K562 (cell line): ENCODE measurements at regions of chr12 and their contacts with region 1.

Region 1: DNA sequence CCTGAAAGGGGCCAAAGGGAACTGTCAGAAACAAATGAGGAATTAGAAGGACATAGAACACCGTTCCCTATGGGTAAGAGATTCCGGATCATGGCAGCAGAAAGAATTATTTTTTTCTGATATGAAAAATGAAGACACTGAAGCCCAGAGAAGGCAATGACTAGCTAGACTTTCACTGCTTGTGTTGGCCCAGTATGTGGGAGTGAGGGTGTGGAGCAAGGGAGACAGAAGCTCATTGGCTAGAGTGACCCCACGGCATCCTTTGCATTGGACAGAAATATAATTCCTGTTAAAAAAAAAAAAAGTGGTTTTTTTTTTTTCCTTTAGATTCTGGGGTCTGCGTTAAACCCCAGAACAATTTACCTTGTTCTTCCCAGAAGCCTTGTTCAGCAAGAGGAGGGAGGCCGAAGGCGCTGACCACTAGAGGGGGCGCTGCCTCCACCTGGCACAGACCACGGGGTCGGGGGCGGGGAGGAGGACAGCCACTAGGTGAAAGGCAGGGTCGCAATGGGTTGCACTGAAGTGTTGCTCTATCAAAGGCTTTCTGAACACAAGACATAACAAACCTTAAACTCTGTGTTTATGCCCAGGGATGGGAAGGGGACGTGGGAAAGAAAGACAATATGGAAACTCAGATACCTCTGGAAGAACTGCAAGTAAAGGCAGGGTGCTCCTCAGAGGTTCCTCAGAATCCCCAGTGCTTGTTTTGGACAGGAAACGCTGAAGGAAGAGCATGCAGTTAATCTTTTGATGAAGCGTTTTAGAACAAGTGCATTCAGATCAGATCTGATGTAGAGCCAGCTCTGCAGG is 156.8 kb downstream of the KCNA5 start:
- DNase-seq: peak; percentile 61 to 74 (median 69)
- ATAC-seq: peak; percentile 90
- H3K4me3 ChIP-seq: no peak overlapping the region
- H3K27ac ChIP-seq: no peak overlapping the region
- H3K4me1 ChIP-seq: no peaks in the 10 kb centered on the region
- H3K27me3 ChIP-seq: no peaks in the 10 kb centered on the region
- CTCF ChIP-seq: peak; percentile 71 to 83 (median 74)
- EP300 ChIP-seq: no peak
- POLR2A ChIP-seq: no peak
- RAD21 ChIP-seq: peak; percentile 68 to 80

Region 2: DNA sequence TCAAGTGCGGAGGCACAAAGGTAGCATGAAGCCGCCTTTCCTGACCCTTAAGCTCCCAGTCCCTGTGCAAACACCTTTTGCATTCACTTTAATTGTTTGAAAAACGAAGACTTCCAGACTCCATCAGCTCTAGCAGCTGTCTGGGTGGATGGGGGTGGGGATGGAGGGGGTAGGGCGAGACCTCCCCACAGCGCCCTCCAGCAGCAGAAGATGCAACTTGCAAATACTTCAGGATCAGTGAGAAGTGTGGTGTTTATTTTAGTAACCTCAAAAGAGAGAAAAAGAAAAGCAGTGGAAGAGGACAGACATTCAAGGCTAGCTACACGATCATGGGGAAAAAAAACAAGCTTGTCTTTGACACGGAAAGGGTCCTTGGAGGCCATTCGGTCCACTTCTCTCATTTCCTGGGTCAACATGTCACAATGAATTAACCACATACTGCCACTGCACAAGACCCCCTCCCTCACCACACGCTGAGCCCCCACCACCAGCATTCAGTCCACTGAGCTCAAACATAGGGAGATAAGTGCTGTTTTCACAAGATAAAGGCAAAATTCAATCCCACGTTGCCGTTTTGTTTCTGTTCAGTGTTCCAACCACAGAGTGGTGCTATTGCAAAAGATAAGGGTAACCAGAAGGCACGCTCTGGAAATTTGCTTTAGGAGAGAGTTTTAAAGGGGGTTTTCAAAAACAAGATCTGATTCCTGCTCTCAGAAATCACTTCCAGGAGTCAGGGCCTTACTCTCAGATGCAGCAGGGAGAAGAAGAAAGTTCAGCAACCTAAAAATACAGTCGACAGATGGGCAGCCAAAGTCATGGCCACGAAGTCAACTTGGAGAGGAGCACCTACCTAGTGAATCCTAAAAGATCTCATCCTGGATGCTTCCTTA is 228.1 kb after region 1 on chr12:
- CTCF ChIA-PET with region 1: no interaction called
- POLR2A ChIA-PET with region 1: no interaction called
- in situ Hi-C with region 1: loop called (anchors 10 kb)
- intact Hi-C with region 1: loop called (anchors 5 kb)
- DNase-seq: peak; percentile 9 to 19 (median 17)
- ATAC-seq: peak; percentile 40; the same call in 1 of the 3 replicates
- H3K4me3 ChIP-seq: no peak overlapping the region
- H3K27ac ChIP-seq: no peak overlapping the region
- H3K4me1 ChIP-seq: no peaks in the 10 kb centered on the region
- H3K27me3 ChIP-seq: peaks cover 2 to 11% of the 10 kb centered on the region in 2 experiments; a peak in 3 of 5 replicates
- CTCF ChIP-seq: peak; percentile 31 to 54 (median 44)
- EP300 ChIP-seq: no peak
- POLR2A ChIP-seq: no peak
- RAD21 ChIP-seq: peak in 1 of 2 experiments; percentile 59; a peak in 3 of 4 replicates

Region 3: GRCh38 chr12:5442251-5443006 is 241.9 kb after region 1 on chr12:
- CTCF ChIA-PET with region 1: interaction called, 21 read pairs
- POLR2A ChIA-PET with region 1: no interaction called
- in situ Hi-C with region 1: loop called (anchors 10 kb)
- intact Hi-C with region 1: loop called (anchors 5 kb)
- DNase-seq: peak; percentile 18 to 44 (median 21)
- ATAC-seq: peak; percentile 72
- H3K4me3 ChIP-seq: no peak overlapping the region
- H3K27ac ChIP-seq: no peak overlapping the region
- H3K4me1 ChIP-seq: no peaks in the 10 kb centered on the region
- H3K27me3 ChIP-seq: peaks cover 0 to 9% of the 10 kb centered on the region in 2 experiments; a peak in 2 of 5 replicates
- CTCF ChIP-seq: peak; percentile 34 to 74 (median 52); a peak in 5 of 6 replicates
- EP300 ChIP-seq: no peak
- POLR2A ChIP-seq: no peak
- RAD21 ChIP-seq: peak; percentile 49 to 74

Region 4: DNA sequence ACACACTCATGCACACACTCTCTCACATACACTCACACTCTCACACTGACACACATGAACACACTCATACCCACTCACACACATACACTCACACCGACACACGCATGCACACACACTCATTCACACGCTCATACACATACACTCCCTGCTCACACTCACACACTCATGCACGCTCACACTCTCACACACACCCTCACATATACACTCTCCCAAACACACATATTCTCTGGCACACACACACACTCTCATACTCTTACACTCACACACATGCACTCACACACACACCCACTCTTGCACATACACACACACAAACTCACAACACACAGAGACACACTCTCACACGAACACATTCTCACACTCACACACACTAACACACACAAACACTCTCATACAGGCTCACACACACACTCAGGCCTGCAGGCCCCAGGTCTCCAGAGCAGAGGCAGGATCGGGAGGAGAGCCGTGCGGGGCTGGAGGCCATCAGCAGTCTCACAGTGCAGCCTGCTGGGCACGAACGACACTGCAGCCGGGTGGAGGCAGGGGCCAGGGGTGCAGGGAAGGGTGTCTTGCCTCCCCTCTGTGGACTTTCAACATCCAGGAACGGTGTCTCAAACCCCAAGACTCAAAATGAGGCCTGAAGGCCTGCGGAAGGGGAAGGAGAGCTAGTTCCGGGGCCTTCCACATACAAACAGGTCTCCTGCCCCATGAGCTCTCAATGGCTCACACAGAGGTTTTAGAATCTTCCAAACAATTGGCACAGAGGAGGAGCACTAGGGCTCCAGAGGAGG is 595.9 kb after region 1 on chr12:
- CTCF ChIA-PET with region 1: no interaction called
- POLR2A ChIA-PET with region 1: no interaction called
- in situ Hi-C with region 1: loop called (anchors 25 kb)
- intact Hi-C with region 1: loop called (anchors 5 kb)
- DNase-seq: peak; percentile 37 to 51 (median 46)
- ATAC-seq: peak; percentile 86
- H3K4me3 ChIP-seq: no peak overlapping the region
- H3K27ac ChIP-seq: no peak overlapping the region
- H3K4me1 ChIP-seq: no peaks in the 10 kb centered on the region
- H3K27me3 ChIP-seq: no peaks in the 10 kb centered on the region; a peak in 1 of 5 replicates
- CTCF ChIP-seq: peak; percentile 59 to 76 (median 66)
- EP300 ChIP-seq: no peak
- POLR2A ChIP-seq: no peak
- RAD21 ChIP-seq: peak; percentile 38 to 69

Region 5: GRCh38 chr12:5803532-5803931 is 603.0 kb after region 1 on chr12:
- CTCF ChIA-PET with region 1: no interaction called
- POLR2A ChIA-PET with region 1: no interaction called
- in situ Hi-C with region 1: loop called (anchors 25 kb)
- intact Hi-C with region 1: loop called (anchors 5 kb)
- DNase-seq: no peak
- ATAC-seq: no peak
- H3K4me3 ChIP-seq: no peak overlapping the region
- H3K27ac ChIP-seq: no peak overlapping the region
- H3K4me1 ChIP-seq: no peaks in the 10 kb centered on the region
- H3K27me3 ChIP-seq: peaks cover 0 to 5% of the 10 kb centered on the region in 2 experiments; a peak in 1 of 5 replicates
- CTCF ChIP-seq: no peak
- EP300 ChIP-seq: no peak
- POLR2A ChIP-seq: no peak
- RAD21 ChIP-seq: no peak